Activated CD4-positive, alpha-beta memory T cell treated with anti-CD3 and anti-CD28 coated beads for 36 hours (primary cell): ENCODE measurements at regions of chr7 and their contacts with region 1.

Region 1: GRCh38 chr7:154857767-154858681 is 144.9 kb downstream of the PAXIP1 start:
- DNase-seq: no peak
- H3K4me3 Mint-ChIP-seq: no peak overlapping the region
- H3K27ac Mint-ChIP-seq: no peak overlapping the region
- H3K4me1 Mint-ChIP-seq: no peaks in the 10 kb centered on the region
- H3K27me3 Mint-ChIP-seq: peaks cover 2% of the 10 kb centered on the region

Region 2: GRCh38 chr7:154167807-154168206 is 690.2 kb before region 1 on chr7:
- CTCF ChIA-PET with region 1: no interaction called
- POLR2A ChIA-PET with region 1: no interaction called
- intact Hi-C with region 1: loop called (anchors 10 kb)
- DNase-seq: no peak
- H3K4me3 Mint-ChIP-seq: no peak overlapping the region
- H3K27ac Mint-ChIP-seq: no peak overlapping the region
- H3K4me1 Mint-ChIP-seq: no peaks in the 10 kb centered on the region
- H3K27me3 Mint-ChIP-seq: no peaks in the 10 kb centered on the region

Region 3: GRCh38 chr7:155153676-155154075 is 295.7 kb after region 1 on chr7:
- CTCF ChIA-PET with region 1: no interaction called
- POLR2A ChIA-PET with region 1: no interaction called
- intact Hi-C with region 1: no loop called
- DNase-seq: no peak
- H3K4me3 Mint-ChIP-seq: no peak overlapping the region
- H3K27ac Mint-ChIP-seq: no peak overlapping the region
- H3K4me1 Mint-ChIP-seq: no peaks in the 10 kb centered on the region
- H3K27me3 Mint-ChIP-seq: peaks cover 13% of the 10 kb centered on the region